Right ventricle myocardium superior (tissue), 1 donor: ENCODE measurements at regions of chr1 and their contacts with region 1.

Region 1: DNA sequence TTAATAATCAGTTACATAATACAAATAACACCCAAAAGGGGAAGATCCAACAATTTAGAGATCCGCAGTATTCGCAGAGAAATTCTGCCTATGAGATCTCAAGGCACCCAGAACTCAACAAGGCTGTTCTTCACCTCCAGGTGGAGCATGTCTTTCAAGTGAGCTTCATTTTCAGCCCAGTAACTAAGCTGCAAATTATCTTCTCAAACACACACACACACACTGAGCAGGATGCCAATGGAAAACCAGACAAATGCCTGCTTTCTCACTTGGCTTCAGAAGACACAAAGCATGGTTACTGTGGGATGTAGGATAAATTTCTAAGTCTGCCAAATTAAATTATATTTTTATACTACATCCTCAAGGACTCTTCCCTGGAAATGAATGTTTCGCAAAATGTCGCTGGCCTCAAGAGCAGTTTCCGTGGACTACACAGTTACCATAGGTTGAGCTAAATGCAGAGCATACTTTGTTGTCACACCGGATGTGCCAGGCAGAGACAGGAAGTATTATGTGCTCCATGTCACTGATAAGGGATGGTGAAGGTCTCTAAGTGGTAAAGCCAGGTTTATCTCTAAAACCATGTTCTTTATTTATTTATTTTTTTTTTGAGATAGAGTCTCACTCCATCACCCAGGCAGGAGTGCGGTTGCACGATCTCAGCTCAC is 30.3 kb downstream of the UBR4 start:
- DNase-seq: no peak
- ATAC-seq: peak; percentile 85

Region 2: GRCh38 chr1:19087737-19088594 is 91.8 kb before region 1 on chr1:
- intact Hi-C with region 1: no loop called
- DNase-seq: no peak
- ATAC-seq: no peak

Region 3: DNA sequence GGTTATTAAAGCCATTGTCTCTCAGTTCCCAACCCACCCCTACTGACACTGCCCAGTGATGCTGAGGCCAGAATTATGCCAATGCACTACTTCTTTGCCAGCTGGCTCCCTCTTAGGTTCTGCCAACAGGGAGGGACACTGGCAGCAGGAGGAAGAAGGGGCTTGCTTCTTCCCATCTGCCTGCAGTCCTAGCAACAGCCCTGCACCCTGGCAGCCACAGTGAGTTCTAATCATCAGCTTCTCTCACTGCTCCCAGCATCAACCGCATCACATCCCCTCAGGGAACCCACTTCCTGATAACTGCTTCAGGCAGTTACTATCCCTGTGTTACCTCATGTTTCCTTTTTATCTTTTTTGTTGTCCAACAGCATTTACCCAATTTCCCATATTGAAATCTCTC is 55.9 kb before region 1 on chr1:
- intact Hi-C with region 1: loop called (anchors 10 kb)
- DNase-seq: no peak
- ATAC-seq: peak; percentile 73

Region 4: DNA sequence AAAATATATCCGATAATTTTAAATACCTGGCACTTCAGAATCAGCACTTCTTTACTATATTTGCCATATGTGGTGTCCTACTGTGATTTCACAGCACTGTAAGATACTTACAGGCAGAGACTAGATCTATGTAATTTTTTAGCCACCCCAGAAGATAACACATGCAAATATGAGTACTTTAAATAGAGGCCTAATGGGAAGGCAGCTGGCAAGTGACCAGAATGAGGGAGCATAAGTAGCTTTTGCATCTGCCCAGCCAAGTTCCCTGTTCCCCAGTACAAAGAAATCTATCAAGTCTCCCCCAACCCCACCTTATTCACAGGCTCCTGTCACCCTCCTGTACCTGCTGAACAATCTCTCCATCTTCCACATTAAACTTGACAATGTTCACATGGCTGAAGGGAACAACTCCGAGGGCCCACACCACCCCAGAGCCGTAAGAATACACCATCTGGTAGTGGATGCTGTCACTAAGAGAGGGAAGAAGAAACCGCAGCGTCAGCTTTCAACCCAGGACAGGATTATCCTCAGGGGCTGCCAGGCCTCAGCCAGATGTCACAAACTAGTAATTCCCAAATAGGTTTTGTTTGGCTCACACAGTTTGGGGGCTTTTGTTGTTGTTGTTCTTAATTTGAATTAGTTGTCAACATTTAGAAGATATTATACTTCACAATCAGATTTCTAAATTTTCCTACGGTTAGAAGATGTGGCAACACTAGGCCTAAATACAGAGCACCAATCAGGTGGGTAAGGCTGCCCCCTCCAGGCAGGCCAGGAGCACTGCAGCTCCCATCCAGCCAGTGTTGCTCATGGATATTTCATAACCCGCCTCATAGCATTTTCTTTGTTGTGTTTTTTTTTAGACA is 61.2 kb after region 1 on chr1:
- intact Hi-C with region 1: loop called (anchors 2 kb)
- DNase-seq: peak; percentile 73
- ATAC-seq: peak; percentile 93

Region 5: GRCh38 chr1:19251305-19252196 is 71.8 kb after region 1 on chr1 and contains the starts of genes EMC1 and MRTO4:
- intact Hi-C with region 1: no loop called
- DNase-seq: peak; percentile 92
- ATAC-seq: peak; percentile 99
- total RNA-seq, gene EMC1: 23.7 TPM
- total RNA-seq, gene MRTO4: 10.8 TPM